ENCODE measurements at regions of chr14 and their contacts with region 1.

Region 1: DNA sequence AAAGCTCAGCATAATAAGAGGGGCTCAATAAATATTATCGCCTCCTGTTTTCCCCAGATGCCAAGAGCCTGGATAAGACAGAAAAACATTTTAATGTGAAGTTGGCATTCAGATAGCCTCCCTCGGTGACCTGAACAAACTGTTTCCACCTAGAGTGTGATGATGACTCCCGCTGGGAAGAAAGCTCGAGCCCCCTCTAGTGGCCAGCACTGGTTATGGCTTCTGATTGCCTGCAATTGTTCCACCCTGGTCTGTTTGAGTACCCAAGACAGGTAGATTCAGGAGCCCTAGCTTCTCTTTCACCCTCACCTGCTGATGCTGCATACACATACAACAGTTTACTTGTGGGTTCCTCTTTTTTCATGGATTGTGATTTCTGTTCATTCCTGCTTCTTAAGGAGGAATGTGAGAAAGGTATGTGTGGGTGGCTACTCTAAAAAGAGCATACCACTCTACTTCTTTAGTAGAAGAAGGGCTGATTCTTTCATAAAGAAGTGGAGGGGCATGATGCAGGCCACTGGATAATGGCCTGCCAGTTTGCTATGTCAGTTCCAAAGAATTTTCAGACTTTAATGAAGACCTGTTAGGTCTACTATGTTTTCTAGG is 6.4 kb downstream of the ERG28 start:
- DNase-seq: peak; percentile 2
- H3K4me3 ChIP-seq: no peak overlapping the region
- H3K27ac ChIP-seq: no peak overlapping the region
- H3K4me1 ChIP-seq: peaks cover 0 to 15% (median 0%) of the 10 kb centered on the region in 3 donors
- H3K27me3 ChIP-seq: no peaks in the 10 kb centered on the region
- CTCF ChIP-seq: peak; percentile 91 to 97 (median 94)
- POLR2A ChIP-seq: no peak

Region 2: DNA sequence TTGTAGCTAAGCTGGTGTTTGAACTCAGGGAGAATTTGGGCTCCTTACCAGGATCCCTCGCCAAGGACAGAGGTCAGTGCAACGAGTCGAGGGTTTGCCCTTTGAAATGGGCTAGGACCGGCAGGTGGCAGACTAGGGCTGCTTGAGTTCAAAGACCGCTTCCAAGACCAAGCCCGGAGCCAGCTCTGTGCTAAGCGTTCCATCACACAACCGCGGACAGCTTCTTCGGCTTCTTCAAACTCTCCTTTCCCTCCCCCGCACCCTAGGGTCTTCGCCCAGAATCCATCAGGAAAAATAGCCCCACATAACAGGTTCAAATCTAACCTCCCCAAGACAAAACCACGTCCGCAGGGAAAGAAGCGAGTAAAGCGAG is 76.5 kb before region 1 on chr14:
- intact Hi-C with region 1: loop called (anchors 2 kb)
- DNase-seq: peak; percentile 40
- H3K4me3 ChIP-seq: peak overlapping the region; percentile 41 to 71 (median 60)
- H3K27ac ChIP-seq: peak overlapping the region; percentile 42 to 89 (median 84)
- H3K4me1 ChIP-seq: peaks cover 18 to 37% (median 19%) of the 10 kb centered on the region in 3 donors
- H3K27me3 ChIP-seq: no peaks in the 10 kb centered on the region
- CTCF ChIP-seq: peak; percentile 55 to 82 (median 76)
- POLR2A ChIP-seq: no peak

Region 3: GRCh38 chr14:75675265-75675960 is 21.2 kb after region 1 on chr14:
- intact Hi-C with region 1: no loop called
- DNase-seq: no peak
- H3K4me3 ChIP-seq: no peak overlapping the region
- H3K27ac ChIP-seq: no peak overlapping the region
- H3K4me1 ChIP-seq: no peaks in the 10 kb centered on the region
- H3K27me3 ChIP-seq: no peaks in the 10 kb centered on the region
- CTCF ChIP-seq: no peak
- POLR2A ChIP-seq: no peak